ENCODE measurements at regions of chr12 and their contacts with region 1.

Region 1: DNA sequence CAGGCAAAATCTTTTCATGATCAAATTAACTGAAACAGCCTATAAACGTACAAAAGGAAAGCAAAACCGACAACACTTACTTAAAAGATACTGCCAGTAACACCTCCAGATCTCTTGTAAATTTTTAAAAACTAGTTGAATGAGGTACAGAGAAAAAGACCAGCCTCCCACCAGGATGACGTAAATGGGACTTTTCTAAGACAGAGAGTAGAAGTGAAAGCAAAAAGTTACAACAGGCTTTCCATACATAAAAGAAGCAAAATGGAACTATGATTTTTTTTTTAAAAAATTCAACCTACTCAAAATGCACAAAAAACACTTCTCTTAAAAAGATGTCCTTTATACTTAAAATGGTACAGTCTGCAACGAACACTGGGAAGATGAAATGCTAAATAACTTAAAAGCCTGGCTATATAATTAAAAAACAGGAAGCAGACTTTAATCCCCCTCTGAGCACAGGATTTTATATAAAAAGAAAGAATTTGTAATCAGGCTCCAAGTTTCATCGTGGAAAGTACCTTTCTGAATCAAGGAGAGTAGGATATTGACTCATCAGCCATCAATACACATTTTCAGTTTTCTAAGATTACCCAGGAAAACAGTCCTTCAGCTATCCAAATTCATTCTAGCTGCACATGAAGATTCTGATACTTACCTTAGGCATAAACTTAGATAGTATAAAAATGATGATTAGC is 14.2 kb upstream of the MYO1A start:
- DNase-seq: peak; percentile 41
- ATAC-seq: no peak
- H3K4me3 ChIP-seq: no peak overlapping the region
- H3K27ac ChIP-seq: no peak overlapping the region
- H3K4me1 ChIP-seq: no peaks in the 10 kb centered on the region
- H3K27me3 ChIP-seq: no peaks in the 10 kb centered on the region
- CTCF ChIP-seq: no peak
- POLR2A ChIP-seq: no peak
- RAD21 ChIP-seq: no peak

Region 2: DNA sequence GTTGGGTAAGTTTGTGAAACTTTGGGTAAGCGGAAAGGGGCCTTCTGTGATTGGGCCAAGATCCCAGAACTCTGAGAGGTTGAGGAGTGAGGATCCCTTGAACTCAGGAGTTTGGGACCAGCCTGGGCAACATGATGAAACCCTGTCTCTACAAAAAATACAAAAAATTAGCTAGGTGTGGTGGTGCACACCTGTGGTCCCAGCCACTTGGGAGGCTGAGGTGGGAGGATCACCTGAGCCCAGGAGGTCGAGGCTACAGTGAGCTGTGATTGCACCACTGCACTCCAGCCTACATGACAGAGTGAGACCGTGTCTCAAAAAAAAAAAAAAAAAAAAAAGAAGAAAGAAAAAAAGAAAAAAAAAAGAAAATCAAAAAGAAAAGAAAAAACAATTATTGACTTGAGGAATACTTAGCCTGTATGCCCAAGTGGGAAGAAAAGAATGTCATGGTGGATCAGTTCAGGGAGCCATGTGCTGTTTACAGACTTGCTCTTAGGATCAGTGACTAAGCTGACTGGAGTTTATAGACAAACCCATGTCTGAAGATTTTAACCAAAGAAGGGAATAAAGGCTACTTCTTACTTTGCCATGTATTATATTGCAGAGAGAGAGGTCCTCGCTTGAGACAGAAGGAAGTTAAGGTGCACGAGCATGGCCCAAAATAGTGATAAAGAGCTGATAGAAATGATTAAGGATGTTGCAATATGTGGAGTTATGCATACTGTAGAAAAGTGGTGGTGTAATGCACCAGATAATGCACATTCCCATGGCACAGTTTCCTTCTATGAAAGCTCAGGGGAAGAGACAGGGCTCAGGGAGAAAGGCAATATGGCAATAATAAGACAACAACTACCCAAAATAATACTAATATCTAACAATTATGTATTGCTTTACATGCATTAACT is 300.1 kb before region 1 on chr12:
- CTCF ChIA-PET with region 1: no interaction called
- POLR2A ChIA-PET with region 1: no interaction called
- dilution Hi-C with region 1: no loop called
- in situ Hi-C with region 1: loop called (anchors 10 kb)
- intact Hi-C with region 1: loop called (anchors 5 kb)
- DNase-seq: peak; percentile 82
- ATAC-seq: peak; percentile 82
- H3K4me3 ChIP-seq: no peak overlapping the region
- H3K27ac ChIP-seq: peak overlapping the region; percentile 32
- H3K4me1 ChIP-seq: no peaks in the 10 kb centered on the region; the same call in 1 of the 2 replicates
- H3K27me3 ChIP-seq: no peaks in the 10 kb centered on the region
- CTCF ChIP-seq: no peak
- POLR2A ChIP-seq: no peak
- RAD21 ChIP-seq: no peak

Region 3: DNA sequence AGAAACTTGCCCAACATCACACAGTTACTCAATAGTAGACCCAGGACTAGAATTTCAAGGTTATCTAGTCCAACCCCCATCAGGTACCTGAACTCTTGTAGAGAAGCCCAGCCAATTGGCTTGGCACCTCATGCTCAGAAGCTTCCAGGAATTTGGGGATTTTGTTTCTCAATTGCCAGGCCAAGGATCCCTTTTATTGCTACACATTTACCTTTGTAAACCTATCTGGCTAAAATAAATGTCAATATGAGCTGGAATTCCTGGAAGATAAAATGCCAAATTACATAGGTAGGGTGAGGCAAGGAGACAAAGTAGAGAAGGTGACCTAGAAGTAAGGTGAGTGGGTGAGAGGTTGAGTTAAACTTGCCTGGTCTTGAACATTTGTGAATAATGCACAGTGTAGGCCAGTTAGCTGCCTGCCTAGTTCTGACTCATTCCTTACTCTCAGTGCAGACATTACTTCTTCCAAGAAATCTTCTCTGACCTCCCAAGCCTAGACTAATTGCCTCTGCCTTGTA is 166.2 kb before region 1 on chr12:
- CTCF ChIA-PET with region 1: no interaction called
- POLR2A ChIA-PET with region 1: no interaction called
- dilution Hi-C with region 1: no loop called
- in situ Hi-C with region 1: no loop called
- intact Hi-C with region 1: no loop called
- DNase-seq: peak; percentile 4
- ATAC-seq: peak; percentile 49; the same call in 1 of the 2 replicates
- H3K4me3 ChIP-seq: no peak overlapping the region
- H3K27ac ChIP-seq: no peak overlapping the region
- H3K4me1 ChIP-seq: no peaks in the 10 kb centered on the region
- H3K27me3 ChIP-seq: no peaks in the 10 kb centered on the region
- CTCF ChIP-seq: no peak
- POLR2A ChIP-seq: no peak
- RAD21 ChIP-seq: no peak

Region 4: DNA sequence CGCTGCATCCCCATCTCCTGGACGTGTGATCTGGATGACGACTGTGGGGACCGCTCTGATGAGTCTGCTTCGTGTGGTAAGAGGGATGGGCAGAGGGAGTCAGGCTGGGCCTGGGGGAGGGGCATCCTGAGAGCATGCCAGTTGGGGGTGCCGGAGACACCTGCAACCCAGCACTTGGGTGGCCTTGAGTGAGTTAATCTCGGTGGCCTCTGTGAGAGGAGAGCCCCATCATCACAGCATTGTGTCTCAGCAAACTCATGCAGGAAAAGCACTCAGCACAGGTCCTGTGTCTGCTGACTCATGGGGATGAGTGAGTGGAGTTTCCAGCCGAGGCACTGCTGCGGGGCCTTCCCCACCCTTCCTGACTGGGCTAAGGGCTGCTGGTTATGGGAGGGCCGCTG is 102.8 kb after region 1 on chr12:
- CTCF ChIA-PET with region 1: no interaction called
- POLR2A ChIA-PET with region 1: no interaction called
- dilution Hi-C with region 1: no loop called
- in situ Hi-C with region 1: no loop called
- intact Hi-C with region 1: no loop called
- DNase-seq: peak; percentile 90
- ATAC-seq: peak; percentile 66
- H3K4me3 ChIP-seq: no peak overlapping the region
- H3K27ac ChIP-seq: no peak overlapping the region
- H3K4me1 ChIP-seq: peaks cover 12% of the 10 kb centered on the region
- H3K27me3 ChIP-seq: no peaks in the 10 kb centered on the region
- CTCF ChIP-seq: no peak
- POLR2A ChIP-seq: no peak
- RAD21 ChIP-seq: 0 out of 2 replicates have a peak, but pooled peaks have one; percentile 4

Measured in IMR-90 (cell line).